ENCODE measurements at regions of chr20 and their contacts with region 1.

Region 1: DNA sequence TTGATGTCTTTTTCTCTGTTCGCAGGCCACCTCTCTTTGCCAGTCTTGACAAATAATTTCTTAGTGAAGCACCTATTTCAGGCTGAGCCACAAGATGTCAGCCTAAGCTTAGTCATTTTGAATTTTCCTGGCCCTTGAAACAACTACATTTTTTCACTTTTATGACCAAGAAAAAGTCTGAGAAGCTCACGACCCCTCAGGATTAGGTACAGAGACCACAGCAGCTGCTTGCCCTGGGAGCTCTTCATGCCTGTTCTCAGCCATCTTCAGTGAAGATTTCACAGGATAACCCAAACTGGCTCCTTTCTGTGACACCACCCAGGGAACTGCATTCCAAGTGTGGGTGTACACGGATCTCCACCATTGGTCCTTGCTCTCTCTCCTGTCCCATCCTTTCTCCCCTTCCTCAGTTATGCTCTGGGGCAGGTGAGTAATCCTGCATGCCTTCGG is 38.4 kb upstream of the SPTLC3 start:
- DNase-seq: peak; percentile 56
- H3K4me3 ChIP-seq: no peak overlapping the region
- H3K27ac ChIP-seq: no peak overlapping the region
- H3K4me1 ChIP-seq: no peaks in the 10 kb centered on the region
- H3K27me3 ChIP-seq: peaks cover 0 to 6% of the 10 kb centered on the region in 2 experiments
- CTCF ChIP-seq: peak; percentile 27 to 42
- POLR2A ChIP-seq: no peak

Region 2: GRCh38 chr20:12984069-12984765 is 13.8 kb after region 1 on chr20:
- CTCF ChIA-PET with region 1: interaction called, 13 read pairs
- POLR2A ChIA-PET with region 1: no interaction called
- dilution Hi-C with region 1: no loop called
- intact Hi-C with region 1: no loop called
- DNase-seq: no peak
- H3K4me3 ChIP-seq: no peak overlapping the region
- H3K27ac ChIP-seq: no peak overlapping the region
- H3K4me1 ChIP-seq: no peaks in the 10 kb centered on the region
- H3K27me3 ChIP-seq: no peaks in the 10 kb centered on the region
- CTCF ChIP-seq: no peak
- POLR2A ChIP-seq: no peak

Region 3: GRCh38 chr20:13105864-13106457 is 135.6 kb after region 1 on chr20:
- CTCF ChIA-PET with region 1: interaction called, 35 read pairs
- POLR2A ChIA-PET with region 1: no interaction called
- dilution Hi-C with region 1: no loop called
- intact Hi-C with region 1: loop called (anchors 1 kb)
- DNase-seq: peak; percentile 34
- H3K4me3 ChIP-seq: no peak overlapping the region
- H3K27ac ChIP-seq: no peak overlapping the region
- H3K4me1 ChIP-seq: no peaks in the 10 kb centered on the region
- H3K27me3 ChIP-seq: peaks cover 0 to 7% of the 10 kb centered on the region in 2 experiments
- CTCF ChIP-seq: peak; percentile 29 to 49
- POLR2A ChIP-seq: no peak

Measured in endothelial cell of umbilical vein (primary cell).